Calu3 (cell line): ENCODE measurements at regions of chrX and their contacts with region 1.

Region 1: GRCh38 chrX:81414630-81415029 is 212.7 kb downstream of the SH3BGRL start:
- DNase-seq: no peak
- H3K4me3 Mint-ChIP-seq: no peak overlapping the region
- H3K27ac Mint-ChIP-seq: no peak overlapping the region
- H3K4me1 Mint-ChIP-seq: no peaks in the 10 kb centered on the region
- H3K27me3 Mint-ChIP-seq: no peaks in the 10 kb centered on the region
- CTCF ChIP-seq: no peak

Region 2: GRCh38 chrX:81174286-81174685 is 240.3 kb before region 1 on chrX:
- CTCF ChIA-PET with region 1: no interaction called
- intact Hi-C with region 1: loop called (anchors 10 kb)
- DNase-seq: no peak
- H3K4me3 Mint-ChIP-seq: no peak overlapping the region
- H3K27ac Mint-ChIP-seq: no peak overlapping the region
- H3K4me1 Mint-ChIP-seq: no peaks in the 10 kb centered on the region
- H3K27me3 Mint-ChIP-seq: no peaks in the 10 kb centered on the region
- CTCF ChIP-seq: no peak

Region 3: GRCh38 chrX:82627568-82627967 is 1212.9 kb after region 1 on chrX:
- CTCF ChIA-PET with region 1: no interaction called
- intact Hi-C with region 1: no loop called
- DNase-seq: no peak
- H3K4me3 Mint-ChIP-seq: no peak overlapping the region
- H3K27ac Mint-ChIP-seq: no peak overlapping the region
- H3K4me1 Mint-ChIP-seq: no peaks in the 10 kb centered on the region
- H3K27me3 Mint-ChIP-seq: no peaks in the 10 kb centered on the region
- CTCF ChIP-seq: no peak